ENCODE measurements at regions of chr12 and their contacts with region 1.

Region 1: DNA sequence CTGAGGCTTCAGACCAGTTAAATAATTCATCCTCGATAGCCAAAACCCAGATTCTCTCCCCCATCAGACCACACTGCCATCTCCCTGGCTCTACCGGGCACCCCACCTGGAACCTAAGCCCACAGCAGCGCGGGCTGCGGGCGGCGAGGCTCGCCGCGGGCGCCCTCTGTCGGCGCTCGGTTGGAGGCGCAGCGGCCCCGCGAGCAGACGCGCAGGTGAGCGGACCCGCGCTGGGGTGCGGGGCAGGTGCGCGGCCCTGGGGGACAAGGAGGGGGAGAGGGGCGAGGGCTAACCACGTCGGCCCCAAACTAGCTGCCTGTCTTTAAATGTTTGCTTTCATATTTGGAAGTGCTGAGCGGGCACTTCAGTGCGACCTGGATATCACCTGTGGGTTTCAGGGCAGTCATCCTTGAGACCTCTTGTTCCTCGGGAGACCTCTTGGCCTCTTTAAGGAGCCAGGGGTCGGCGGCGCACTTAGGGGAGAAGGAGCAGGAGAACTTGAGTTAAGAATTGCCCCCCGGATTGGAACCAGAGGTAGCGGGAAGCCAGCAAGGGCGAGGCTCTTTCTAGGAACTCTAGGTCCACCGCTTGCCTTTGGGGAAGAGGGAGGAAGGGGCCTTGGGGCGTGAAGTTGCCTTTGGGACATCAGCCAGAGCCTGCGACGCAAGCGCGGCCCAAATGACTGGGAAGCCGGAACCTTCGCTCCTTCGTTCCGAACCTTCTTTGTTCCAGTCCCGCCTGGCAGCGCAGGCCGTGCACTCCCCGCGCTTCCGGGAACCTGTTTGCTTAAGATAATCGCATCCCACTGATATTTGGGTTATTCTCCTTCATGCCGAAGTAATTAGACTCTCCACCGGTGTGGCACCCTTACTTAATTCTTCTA is 78.7 kb downstream of the NEDD1 start:
- DNase-seq: peak; percentile 15 to 58 (median 56)
- ATAC-seq: peak; percentile 59 to 74
- H3K4me3 ChIP-seq: peak overlapping the region; percentile 25
- H3K27ac ChIP-seq: no peak overlapping the region
- H3K4me1 ChIP-seq: no peaks in the 10 kb centered on the region
- H3K27me3 ChIP-seq: no peaks in the 10 kb centered on the region

Region 2: GRCh38 chr12:96578526-96579125 is 407.1 kb before region 1 on chr12:
- intact Hi-C with region 1: loop called in 2 of 4 experiments (anchors 10 kb)
- DNase-seq: no peak
- ATAC-seq: peak; percentile 51
- H3K4me3 ChIP-seq: no peak overlapping the region
- H3K27ac ChIP-seq: no peak overlapping the region
- H3K4me1 ChIP-seq: no peaks in the 10 kb centered on the region
- H3K27me3 ChIP-seq: no peaks in the 10 kb centered on the region

Region 3: GRCh38 chr12:97308576-97309198 is 323.0 kb after region 1 on chr12:
- intact Hi-C with region 1: loop called in 3 of 4 experiments (anchors 5 to 10 kb)
- DNase-seq: no peak
- ATAC-seq: no peak
- H3K4me3 ChIP-seq: no peak overlapping the region
- H3K27ac ChIP-seq: no peak overlapping the region
- H3K4me1 ChIP-seq: no peaks in the 10 kb centered on the region
- H3K27me3 ChIP-seq: peaks cover 2% of the 10 kb centered on the region